ENCODE measurements at regions of chr1 and their contacts with region 1.

Region 1: GRCh38 chr1:101309334-101310311 is 72.8 kb downstream of the S1PR1 start:
- DNase-seq: no peak
- H3K4me3 ChIP-seq: peak overlapping the region; percentile 29
- H3K27ac ChIP-seq: no peak overlapping the region
- H3K27me3 ChIP-seq: peaks cover 39% of the 10 kb centered on the region
- CTCF ChIP-seq: peak; percentile 89

Region 2: DNA sequence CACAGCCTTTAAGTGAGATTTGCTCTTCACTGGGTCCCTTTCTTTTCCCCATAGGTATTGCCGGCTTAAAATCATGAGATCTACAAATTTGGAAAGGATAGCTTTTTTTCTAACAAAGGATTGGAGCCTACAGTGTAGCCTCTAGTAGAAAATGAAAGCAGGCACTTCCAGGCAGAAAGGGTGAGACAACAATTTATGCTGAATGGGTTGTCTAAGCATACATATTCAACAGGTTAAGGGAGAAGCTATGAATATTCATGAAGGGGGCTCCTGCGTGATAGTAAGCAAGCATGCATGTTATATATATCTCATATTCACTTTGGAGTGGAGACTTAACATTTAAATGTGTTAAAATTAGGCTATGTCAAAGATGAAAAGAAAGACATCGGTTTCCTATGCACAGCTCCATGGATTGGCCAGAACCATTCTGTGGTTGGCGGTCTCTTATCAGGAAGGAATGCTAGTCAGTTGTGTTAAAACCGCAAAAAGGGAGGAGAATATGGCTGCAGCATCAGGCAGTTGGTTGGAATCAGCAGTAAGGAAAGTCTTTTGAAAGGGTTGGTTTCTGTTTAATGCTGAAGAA is 524.1 kb before region 1 on chr1:
- CTCF ChIA-PET with region 1: no interaction called
- POLR2A ChIA-PET with region 1: no interaction called
- DNase-seq: no peak
- H3K4me3 ChIP-seq: no peak overlapping the region
- H3K27ac ChIP-seq: no peak overlapping the region
- H3K27me3 ChIP-seq: no peaks in the 10 kb centered on the region
- CTCF ChIP-seq: no peak

Region 3: GRCh38 chr1:101253976-101254674 is 55.5 kb before region 1 on chr1:
- CTCF ChIA-PET with region 1: interaction called, 10 read pairs
- POLR2A ChIA-PET with region 1: no interaction called
- DNase-seq: no peak
- H3K4me3 ChIP-seq: no peak overlapping the region
- H3K27ac ChIP-seq: no peak overlapping the region
- H3K27me3 ChIP-seq: no peaks in the 10 kb centered on the region
- CTCF ChIP-seq: no peak

Region 4: DNA sequence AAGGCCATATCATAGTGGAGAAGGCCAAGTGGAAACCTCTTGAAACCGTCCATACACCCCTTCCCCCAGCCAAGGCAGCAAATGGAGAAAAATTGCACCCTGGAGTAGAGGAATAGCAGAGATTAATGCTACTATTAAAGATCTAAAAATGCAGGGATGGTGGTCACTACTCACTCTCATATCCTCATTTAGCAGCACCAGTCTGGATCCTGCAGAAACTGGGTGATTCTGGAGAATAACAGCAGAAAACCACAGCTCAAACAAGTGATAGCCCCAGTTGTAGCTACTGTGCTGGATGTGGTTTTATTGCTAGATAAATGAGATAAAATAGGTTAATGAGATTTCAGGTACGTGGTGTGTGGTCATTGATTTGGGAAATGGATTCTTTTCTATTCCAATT is 42.5 kb before region 1 on chr1:
- CTCF ChIA-PET with region 1: no interaction called
- POLR2A ChIA-PET with region 1: no interaction called
- DNase-seq: no peak
- H3K4me3 ChIP-seq: no peak overlapping the region
- H3K27ac ChIP-seq: no peak overlapping the region
- H3K27me3 ChIP-seq: no peaks in the 10 kb centered on the region
- CTCF ChIP-seq: no peak

Region 5: DNA sequence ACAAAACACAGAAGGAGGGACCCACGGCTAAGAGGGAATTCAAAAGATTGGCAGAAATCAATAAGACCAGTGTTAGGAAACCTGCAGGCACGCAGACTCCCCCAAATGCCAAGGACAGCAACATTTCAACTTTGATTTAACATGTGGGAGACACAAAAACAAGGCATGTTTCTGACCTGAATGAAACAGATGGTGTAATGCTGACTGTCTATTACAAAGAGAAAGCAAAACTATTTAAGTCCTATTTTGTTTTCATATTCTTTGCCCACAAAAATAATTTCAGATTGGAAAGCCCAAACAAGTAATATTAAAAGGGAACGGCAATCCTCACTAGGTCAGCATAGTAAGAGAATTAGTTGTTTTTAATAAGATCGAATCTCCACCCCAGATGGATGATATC is 35.1 kb after region 1 on chr1:
- CTCF ChIA-PET with region 1: interaction called, 13 read pairs
- POLR2A ChIA-PET with region 1: no interaction called
- DNase-seq: no peak
- H3K4me3 ChIP-seq: no peak overlapping the region
- H3K27ac ChIP-seq: no peak overlapping the region
- H3K27me3 ChIP-seq: no peaks in the 10 kb centered on the region
- CTCF ChIP-seq: no peak

Region 6: GRCh38 chr1:101364370-101365120 is 54.9 kb after region 1 on chr1:
- CTCF ChIA-PET with region 1: interaction called, 17 read pairs
- POLR2A ChIA-PET with region 1: no interaction called
- DNase-seq: no peak
- H3K4me3 ChIP-seq: no peak overlapping the region
- H3K27ac ChIP-seq: no peak overlapping the region
- H3K27me3 ChIP-seq: no peaks in the 10 kb centered on the region
- CTCF ChIP-seq: no peak

Region 7: DNA sequence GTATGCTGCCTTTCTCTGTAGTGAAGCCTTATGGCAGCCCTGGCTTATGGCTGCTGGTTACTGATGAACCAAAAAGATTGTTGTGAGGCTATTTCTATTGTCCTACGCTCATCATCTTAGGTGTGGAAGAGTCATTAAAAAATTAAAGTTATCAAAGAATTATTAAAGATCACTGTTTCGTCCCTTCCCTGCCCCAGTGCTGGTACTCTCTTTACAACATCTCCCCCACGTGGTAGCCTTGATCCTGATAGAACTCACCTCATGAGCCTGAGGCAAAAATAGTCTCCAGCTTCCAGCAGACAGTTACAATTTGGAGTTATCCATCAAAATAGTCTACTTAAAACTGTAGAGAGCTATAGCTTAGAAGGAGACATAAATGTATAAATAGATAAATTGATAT is 128.7 kb after region 1 on chr1:
- CTCF ChIA-PET with region 1: interaction called, 66 read pairs
- POLR2A ChIA-PET with region 1: no interaction called
- DNase-seq: no peak
- H3K4me3 ChIP-seq: no peak overlapping the region
- H3K27ac ChIP-seq: no peak overlapping the region
- H3K27me3 ChIP-seq: no peaks in the 10 kb centered on the region
- CTCF ChIP-seq: peak; percentile 44

Measured in AG04450 (cell line).